Ovary (tissue), 10 donors: ENCODE measurements at regions of chr17 and their contacts with region 1.

Region 1: DNA sequence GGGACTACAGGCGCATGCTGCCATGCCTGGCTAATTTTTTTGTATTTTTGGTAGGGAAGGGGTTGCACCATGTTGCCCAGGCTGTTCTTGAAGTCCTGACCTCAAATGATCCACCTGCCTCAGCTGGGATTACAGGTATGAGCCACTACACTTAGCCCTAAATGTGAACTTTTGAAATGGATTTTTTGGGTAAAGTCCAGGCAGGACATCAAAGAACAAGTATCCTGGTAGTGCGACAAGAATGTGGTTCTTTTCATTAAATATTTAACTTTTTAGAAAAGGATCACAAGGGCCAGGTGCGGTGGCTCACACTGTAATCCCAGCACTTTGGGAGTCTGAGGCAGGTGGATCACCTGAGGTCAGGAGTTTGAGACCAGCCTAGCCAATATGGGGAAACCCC is 15.3 kb upstream of the NBR1 start:
- DNase-seq: no peak
- H3K4me3 ChIP-seq: no peak overlapping the region
- H3K27ac ChIP-seq: no peak overlapping the region
- H3K4me1 ChIP-seq: peaks cover 3% of the 10 kb centered on the region
- H3K27me3 ChIP-seq: no peaks in the 10 kb centered on the region
- CTCF ChIP-seq: no peak
- EP300 ChIP-seq: no peak
- POLR2A ChIP-seq: no peak

Region 2: DNA sequence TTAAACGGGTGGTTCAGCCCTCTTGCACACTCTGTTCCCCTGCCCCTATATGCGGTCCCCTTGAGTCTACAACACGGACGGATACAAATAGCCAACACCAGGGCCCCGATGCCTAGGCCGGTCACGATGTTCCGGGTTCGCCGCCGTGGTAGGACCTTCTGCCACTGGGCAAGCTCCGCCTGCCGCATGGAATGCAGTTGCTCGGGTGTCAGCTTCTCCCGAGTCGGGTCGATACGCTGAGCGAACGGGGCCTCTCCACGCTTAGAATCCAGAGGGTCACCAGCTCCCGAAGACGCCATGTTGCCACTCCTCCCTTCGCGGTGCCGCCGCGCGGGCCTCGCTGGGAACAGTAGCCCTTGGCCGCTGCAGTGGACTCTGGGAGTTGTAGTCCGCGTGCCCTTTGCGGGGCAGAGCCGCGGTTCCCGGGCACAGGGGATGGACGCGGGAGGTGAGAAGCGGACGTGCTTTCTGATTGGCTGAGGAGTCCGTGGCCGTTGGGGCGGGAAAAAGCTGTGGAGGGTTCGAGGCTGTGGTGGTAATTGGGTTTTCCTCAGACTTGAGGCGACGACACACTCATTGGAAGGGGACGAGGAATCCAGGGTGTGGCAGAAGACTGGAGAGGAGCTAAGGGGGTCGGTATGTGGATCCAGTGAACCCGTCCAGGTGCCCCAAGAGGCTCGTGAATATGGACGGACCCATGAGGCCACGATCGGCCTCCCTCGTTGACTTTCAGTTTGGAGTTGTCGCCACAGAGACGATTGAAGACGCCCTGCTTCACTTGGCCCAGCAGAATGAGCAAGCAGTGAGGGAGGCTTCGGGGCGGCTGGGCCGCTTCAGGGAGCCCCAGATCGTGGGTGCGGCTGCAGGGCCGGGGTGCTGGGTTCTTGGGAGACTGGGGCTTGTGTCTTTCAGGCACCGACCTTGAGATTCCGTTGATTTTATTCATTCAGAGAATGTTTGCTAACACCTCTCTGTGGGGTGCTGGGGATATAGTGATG is 357.0 kb before region 1 on chr17 and contains the starts of genes CNTD1 and COA3:
- intact Hi-C with region 1: no loop called
- DNase-seq: peak; percentile 82 to 89 (median 86)
- H3K4me3 ChIP-seq: peak within 1 kb of the TSS; percentile 85
- H3K27ac ChIP-seq: peak within 1 kb of the TSS; percentile 32 to 62
- H3K4me1 ChIP-seq: peaks cover 10% of the 10 kb centered on the region
- H3K27me3 ChIP-seq: no peaks in the 10 kb centered on the region
- CTCF ChIP-seq: peak in 1 of 3 donors; percentile 18
- EP300 ChIP-seq: no peak
- POLR2A ChIP-seq: no peak
- total RNA-seq, gene CNTD1: 0.30 to 0.79 (median 0.33) TPM in 5 of 7 donors, not detected in the others
- total RNA-seq, gene COA3: 49.1 to 78.2 (median 62.9) TPM

Region 3: DNA sequence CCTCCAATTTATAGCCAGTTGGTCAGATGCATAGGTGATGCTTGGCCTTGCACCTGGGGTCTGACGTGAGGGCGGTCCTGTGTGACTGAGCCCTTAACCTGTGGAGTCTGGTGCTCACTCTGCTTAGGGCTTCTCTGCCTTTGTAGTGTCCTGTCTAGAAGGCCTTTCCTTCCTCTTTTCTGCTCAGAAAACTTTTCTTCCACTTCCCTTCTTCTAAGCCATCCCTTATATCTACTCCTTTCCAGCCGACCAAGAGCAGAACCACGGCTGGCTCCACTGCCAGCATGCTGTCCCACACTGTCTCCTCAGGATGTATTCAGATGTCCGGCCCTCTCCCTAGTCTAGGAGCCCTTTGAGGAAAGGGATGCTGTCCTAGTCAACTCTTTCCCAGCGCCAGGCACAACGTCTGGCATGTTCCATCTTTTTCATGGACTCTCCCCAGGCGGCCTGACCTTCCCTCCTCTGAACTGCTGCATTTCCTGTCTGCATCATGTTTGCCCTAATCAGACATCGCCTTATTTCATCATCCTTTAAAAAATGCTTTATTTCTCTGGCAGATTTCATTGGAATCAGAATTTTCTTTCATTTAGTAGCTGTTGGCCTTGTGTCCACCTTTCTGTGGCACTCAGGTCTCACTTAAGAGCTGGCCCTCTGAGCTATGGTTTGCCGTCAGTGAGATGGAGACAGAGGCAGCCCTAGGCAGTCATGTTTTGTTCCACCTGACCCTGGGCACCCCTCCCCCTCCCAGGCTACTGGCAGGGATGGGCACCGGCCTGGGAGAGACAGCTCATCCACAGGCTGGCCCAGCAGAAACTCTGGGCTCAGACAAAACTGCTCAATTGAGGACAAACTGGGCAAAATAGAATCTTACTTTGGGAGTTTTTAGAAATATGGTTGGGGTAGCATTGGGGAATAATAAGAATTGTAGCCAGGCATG is 15.0 kb before region 1 on chr17:
- intact Hi-C with region 1: loop called in 1 of 4 experiments (anchors 2 kb)
- DNase-seq: peak in 1 of 5 donors; percentile 4
- H3K4me3 ChIP-seq: no peak overlapping the region
- H3K27ac ChIP-seq: no peak overlapping the region
- H3K4me1 ChIP-seq: no peaks in the 10 kb centered on the region
- H3K27me3 ChIP-seq: no peaks in the 10 kb centered on the region
- CTCF ChIP-seq: no peak
- EP300 ChIP-seq: no peak
- POLR2A ChIP-seq: no peak